ENCODE measurements at regions of chr1 and their contacts with region 1.

Region 1: DNA sequence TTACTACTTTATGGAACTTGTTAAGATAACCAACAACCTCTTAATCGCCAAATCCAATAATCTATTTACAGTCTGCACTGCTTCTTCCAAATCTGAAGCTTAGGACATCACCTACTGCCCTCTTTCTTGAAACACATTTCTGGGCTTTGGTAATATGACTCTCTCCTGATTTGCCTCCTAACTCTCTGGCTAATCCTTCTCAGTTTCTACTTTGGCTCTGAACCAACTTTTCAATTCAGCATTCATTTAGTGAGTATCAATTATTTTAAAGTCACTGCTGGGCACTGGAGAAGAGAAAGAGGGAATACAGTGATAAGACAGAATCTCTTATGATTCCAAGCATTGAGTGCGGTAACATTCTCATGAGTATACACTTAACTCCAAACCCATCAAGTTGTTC is 275.0 kb downstream of the AKT3 start:
- DNase-seq: no peak
- ATAC-seq: no peak
- H3K4me3 ChIP-seq: no peak overlapping the region
- H3K27ac ChIP-seq: no peak overlapping the region
- H3K4me1 ChIP-seq: no peaks in the 10 kb centered on the region
- H3K27me3 ChIP-seq: no peaks in the 10 kb centered on the region
- CTCF ChIP-seq: no peak

Region 2: DNA sequence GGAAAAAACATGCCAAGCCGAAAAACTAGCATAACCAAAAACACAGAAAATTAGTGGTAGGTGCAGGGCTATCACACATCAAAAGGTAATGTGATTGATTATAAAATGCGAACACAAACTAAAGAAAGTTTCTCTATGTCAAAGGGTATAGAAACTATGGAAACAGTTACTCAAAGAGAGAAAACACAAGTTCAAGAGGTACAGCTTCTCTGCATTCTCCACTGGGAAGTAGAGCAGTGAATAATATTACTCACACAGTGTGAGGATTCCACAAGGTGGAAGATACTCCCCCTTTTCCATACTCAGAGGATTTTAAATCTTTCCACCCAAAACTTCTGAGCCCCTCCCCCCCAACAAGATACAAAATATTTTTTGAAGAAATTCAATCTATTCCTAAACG is 256.4 kb after region 1 on chr1:
- intact Hi-C with region 1: loop called in 1 of 10 experiments (anchors 5 kb)
- DNase-seq: no peak
- ATAC-seq: no peak
- H3K4me3 ChIP-seq: no peak overlapping the region
- H3K27ac ChIP-seq: no peak overlapping the region
- H3K4me1 ChIP-seq: peaks cover 0 to 17% (median 0%) of the 10 kb centered on the region in 9 donors
- H3K27me3 ChIP-seq: no peaks in the 10 kb centered on the region
- CTCF ChIP-seq: no peak